ENCODE measurements at regions of chr16 and their contacts with region 1.

Region 1: DNA sequence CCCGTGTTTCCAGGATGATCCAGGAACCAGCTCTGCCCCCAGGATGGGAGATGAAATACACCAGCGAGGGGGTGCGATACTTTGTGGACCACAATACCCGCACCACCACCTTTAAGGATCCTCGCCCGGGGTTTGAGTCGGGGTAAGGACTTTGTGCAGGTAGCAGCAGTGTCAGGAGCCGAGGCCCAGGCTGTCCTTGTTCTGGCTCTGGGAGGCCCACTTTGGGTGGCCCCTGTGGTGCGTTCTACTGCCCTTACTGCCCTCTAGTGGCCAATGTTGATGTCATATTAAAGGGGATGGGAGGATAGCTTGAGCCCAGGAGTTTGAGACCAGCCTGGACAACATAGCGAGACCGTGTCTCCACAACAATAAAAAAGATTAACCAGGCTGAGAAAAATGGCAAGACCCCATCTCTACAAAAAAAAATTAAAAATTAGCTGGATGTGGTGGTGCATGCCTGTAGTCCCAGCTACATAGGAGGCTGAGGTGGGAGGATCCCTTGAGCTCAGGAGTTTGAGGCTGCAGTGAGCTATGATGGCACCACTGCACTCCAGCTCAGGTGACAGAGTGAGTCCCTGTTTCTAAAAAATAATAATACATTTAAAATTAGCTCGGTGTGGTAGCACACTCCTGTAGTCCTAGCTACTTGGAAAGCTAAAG is 20.9 kb upstream of the CLEC18A start:
- DNase-seq: no peak
- H3K4me3 ChIP-seq: no peak overlapping the region
- H3K27ac ChIP-seq: no peak overlapping the region
- H3K4me1 ChIP-seq: peaks cover 31% of the 10 kb centered on the region
- H3K27me3 ChIP-seq: no peaks in the 10 kb centered on the region
- CTCF ChIP-seq: peak; percentile 65 to 81 (median 69)
- POLR2A ChIP-seq: no peak

Region 2: DNA sequence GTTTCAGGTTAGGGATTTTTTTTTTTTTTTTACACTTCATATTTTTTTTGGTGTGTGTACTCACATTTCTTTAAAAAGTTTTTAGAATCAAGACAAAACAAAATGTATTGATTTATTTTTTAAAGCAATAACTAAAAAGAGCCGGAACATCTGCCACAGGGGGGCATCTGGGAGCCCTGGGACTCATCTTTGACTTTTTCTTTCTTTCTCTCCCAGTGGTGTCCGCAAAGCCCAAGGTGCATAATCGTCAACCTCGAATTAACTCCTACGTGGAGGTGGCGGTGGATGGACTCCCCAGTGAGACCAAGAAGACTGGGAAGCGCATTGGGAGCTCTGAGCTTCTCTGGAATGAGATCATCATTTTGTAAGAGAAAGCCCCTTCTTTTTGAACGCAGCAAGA is 131.8 kb before region 1 on chr16:
- intact Hi-C with region 1: loop called (anchors 2 kb)
- DNase-seq: no peak
- H3K4me3 ChIP-seq: no peak overlapping the region
- H3K27ac ChIP-seq: no peak overlapping the region
- H3K4me1 ChIP-seq: no peaks in the 10 kb centered on the region
- H3K27me3 ChIP-seq: no peaks in the 10 kb centered on the region
- CTCF ChIP-seq: no peak
- POLR2A ChIP-seq: no peak

Region 3: GRCh38 chr16:69848637-69849545 is 81.4 kb before region 1 on chr16:
- intact Hi-C with region 1: loop called (anchors 2 kb)
- DNase-seq: no peak
- H3K4me3 ChIP-seq: no peak overlapping the region
- H3K27ac ChIP-seq: peak overlapping the region; percentile 57
- H3K4me1 ChIP-seq: peaks cover 24% of the 10 kb centered on the region
- H3K27me3 ChIP-seq: no peaks in the 10 kb centered on the region
- CTCF ChIP-seq: no peak
- POLR2A ChIP-seq: no peak